H1 (cell line): ENCODE measurements at regions of chr14 and their contacts with region 1.

Region 1: GRCh38 chr14:43894534-43894933 is 612.5 kb downstream of the FSCB start:
- DNase-seq: no peak
- H3K4me3 ChIP-seq: no peak overlapping the region
- H3K27ac ChIP-seq: no peak overlapping the region
- H3K4me1 ChIP-seq: no peaks in the 10 kb centered on the region
- H3K27me3 ChIP-seq: no peaks in the 10 kb centered on the region
- CTCF ChIP-seq: peak in 2 of 3 experiments; percentile 38 to 60; a peak in 2 of 4 replicates
- EP300 ChIP-seq: no peak
- POLR2A ChIP-seq: no peak
- RAD21 ChIP-seq: peak; percentile 58 to 66

Region 2: DNA sequence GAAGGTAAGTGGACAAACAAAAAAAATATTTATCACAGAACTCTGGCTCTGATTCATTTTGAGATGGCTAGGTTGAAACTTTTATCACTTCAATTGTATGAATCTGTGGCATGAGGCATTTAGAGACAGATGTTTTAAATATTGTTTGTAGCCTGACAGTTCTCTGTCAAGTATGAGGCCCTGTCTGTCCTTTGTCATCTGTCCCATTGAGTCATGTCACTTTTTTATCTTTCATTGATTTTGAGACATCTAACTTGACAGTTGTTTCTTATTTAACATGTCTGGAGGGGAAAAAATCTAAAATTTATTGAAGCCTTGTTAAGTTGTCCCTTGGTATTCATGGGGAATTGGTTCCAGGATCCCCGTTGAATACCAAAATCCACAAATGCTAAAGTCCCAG is 217.0 kb before region 1 on chr14:
- CTCF ChIA-PET with region 1: no interaction called
- POLR2A ChIA-PET with region 1: no interaction called
- DNase-seq: no peak
- H3K4me3 ChIP-seq: no peak overlapping the region
- H3K27ac ChIP-seq: no peak overlapping the region
- H3K4me1 ChIP-seq: no peaks in the 10 kb centered on the region
- H3K27me3 ChIP-seq: no peaks in the 10 kb centered on the region
- CTCF ChIP-seq: no peak
- EP300 ChIP-seq: no peak
- POLR2A ChIP-seq: no peak
- RAD21 ChIP-seq: no peak

Region 3: GRCh38 chr14:43877351-43877960 is 17.1 kb before region 1 on chr14:
- CTCF ChIA-PET with region 1: interaction called, 18 read pairs
- POLR2A ChIA-PET with region 1: no interaction called
- DNase-seq: no peak
- H3K4me3 ChIP-seq: no peak overlapping the region
- H3K27ac ChIP-seq: no peak overlapping the region
- H3K4me1 ChIP-seq: peaks cover 0 to 6% (median 5%) of the 10 kb centered on the region in 4 experiments; a peak in 2 of 7 replicates
- H3K27me3 ChIP-seq: no peaks in the 10 kb centered on the region
- CTCF ChIP-seq: no peak
- EP300 ChIP-seq: no peak
- POLR2A ChIP-seq: no peak
- RAD21 ChIP-seq: no peak